ENCODE measurements at regions of chrX and their contacts with region 1.

Region 1: GRCh38 chrX:136268051-136269048 is 17.1 kb upstream of the MAP7D3 start:
- DNase-seq: peak in 2 of 4 donors; percentile 12 to 53
- ATAC-seq: peak; percentile 73
- H3K4me3 ChIP-seq: no peak overlapping the region
- H3K27ac ChIP-seq: no peak overlapping the region
- H3K4me1 ChIP-seq: no peaks in the 10 kb centered on the region
- H3K27me3 ChIP-seq: no peaks in the 10 kb centered on the region
- CTCF ChIP-seq: peak; percentile 71 to 83

Region 2: DNA sequence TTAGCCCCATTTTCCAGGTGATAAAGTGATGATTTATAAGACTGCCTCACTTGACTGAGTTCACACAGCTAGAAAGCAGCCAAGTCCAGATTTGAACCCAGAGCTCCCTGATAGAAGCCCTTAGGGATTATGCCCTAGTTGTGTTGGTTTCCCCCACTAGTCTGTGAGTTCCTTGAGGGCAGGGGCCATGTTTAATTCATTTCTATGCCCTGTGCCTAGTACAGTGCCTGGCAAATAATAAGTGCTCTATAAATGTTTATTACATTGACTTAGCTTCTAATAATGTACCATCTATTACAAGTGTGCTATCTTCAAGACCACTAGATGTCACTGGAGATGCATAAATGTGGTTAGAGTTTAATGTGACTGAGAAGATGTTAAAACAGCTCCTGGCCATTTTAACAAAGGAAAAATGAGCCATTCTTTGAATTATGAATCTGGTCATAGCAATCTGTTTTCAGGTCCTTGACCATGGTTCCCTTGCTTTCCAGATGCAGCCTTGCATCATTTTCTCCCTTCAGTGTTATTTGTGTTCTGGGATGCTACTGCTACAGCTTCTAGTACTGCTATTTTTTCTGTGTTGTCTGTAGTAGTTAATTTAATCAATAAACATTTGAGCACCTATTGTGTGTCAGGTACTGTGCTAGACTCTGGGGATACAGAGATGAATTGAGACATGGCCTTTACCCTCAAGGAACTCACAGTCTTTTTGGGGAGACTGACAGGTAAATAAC is 239.9 kb before region 1 on chrX:
- intact Hi-C with region 1: loop called in 1 of 2 experiments (anchors 10 kb)
- DNase-seq: peak in 2 of 4 donors; percentile 51 to 57
- ATAC-seq: peak; percentile 82
- H3K4me3 ChIP-seq: no peak overlapping the region
- H3K27ac ChIP-seq: no peak overlapping the region
- H3K4me1 ChIP-seq: no peaks in the 10 kb centered on the region
- H3K27me3 ChIP-seq: no peaks in the 10 kb centered on the region
- CTCF ChIP-seq: peak; percentile 30 to 51